ENCODE measurements at regions of chr2 and their contacts with region 1.

Region 1: DNA sequence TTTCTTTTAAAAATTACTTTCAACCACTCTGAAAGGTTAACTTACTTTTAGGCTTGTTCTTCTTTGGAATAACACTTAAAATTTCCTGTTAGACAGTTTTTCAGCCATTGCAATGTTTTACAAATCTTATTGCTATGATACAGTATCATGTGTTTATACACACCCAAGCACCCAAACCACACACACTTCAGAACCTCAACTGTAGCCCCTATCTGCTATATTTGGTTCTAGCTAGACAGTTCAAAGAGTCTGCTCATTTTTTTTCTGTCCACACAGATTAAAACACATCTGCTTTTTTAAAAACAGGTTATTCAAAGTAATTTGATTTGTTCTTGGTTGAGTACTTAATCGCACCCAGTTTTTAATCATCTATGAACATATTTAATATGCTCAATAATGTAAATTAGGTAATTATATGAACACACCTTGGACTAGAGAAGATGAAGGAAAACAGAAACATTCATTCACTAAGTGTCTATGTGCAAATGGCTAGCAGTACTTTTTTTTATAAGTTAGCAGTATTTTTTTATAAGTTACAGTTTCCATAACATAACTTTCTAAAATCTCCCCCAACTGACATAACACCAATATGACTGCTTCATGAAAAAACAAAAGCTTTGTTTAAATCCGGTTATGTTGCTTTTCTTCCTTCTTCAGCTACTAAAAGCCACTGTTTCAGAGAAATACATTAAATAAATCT is 17.6 kb downstream of the FBXO11 start:
- DNase-seq: peak; percentile 50 to 71 (median 63)
- H3K4me3 ChIP-seq: no peak overlapping the region
- H3K4me3 Mint-ChIP-seq: peak overlapping the region in 7 of 8 donors; percentile 39 to 76 (median 58)
- H3K27ac ChIP-seq: peak overlapping the region; percentile 2
- H3K27ac Mint-ChIP-seq: peak overlapping the region; percentile 47 to 92 (median 80)
- H3K4me1 ChIP-seq: peaks cover 54% of the 10 kb centered on the region
- H3K4me1 Mint-ChIP-seq: peaks cover 48 to 80% (median 58%) of the 10 kb centered on the region in 4 donors
- H3K27me3 ChIP-seq: no peaks in the 10 kb centered on the region
- H3K27me3 Mint-ChIP-seq: no peaks in the 10 kb centered on the region

Region 2: DNA sequence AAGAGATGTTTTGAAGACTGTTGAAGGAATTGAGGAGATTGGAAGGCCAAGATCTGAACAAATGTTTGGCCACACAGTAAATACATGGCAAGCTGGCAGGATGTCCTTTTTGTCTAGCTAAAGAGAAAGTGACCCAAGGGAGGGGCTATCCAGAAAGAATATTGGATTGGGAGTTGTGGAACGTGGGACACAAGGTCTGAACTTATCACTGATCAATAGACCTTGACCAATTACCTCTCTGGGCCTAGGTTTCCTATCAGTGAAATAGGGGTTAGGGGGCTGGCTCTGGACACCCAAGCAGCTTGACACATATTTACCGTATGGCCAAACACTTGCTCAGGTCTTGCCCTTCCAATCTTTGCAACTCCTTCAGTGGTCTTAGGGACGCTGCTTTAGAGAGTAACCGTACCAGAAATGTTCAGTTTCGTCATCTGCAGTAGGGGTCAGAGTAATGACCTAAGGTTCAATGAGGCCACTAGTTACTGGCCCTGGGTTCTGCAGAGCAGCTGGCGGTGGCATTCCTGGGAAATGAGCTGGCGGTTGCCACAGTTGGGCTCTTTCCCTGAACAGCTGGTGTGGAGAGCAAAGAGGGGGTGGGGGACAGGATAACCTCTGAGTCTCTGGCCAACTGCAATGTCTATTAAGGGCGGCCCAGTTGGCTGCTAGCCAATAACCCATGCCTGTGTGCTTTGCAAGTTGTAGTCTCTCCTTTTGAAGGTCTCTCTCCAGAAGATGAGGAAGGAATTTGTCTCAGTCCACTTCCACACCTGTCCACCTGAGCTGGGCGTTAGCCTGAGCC is 663.5 kb before region 1 on chr2:
- CTCF ChIA-PET with region 1: no interaction called
- POLR2A ChIA-PET with region 1: no interaction called
- intact Hi-C with region 1: no loop called
- DNase-seq: no peak
- H3K4me3 ChIP-seq: no peak overlapping the region
- H3K4me3 Mint-ChIP-seq: no peak overlapping the region
- H3K27ac ChIP-seq: no peak overlapping the region
- H3K27ac Mint-ChIP-seq: no peak overlapping the region
- H3K4me1 ChIP-seq: no peaks in the 10 kb centered on the region
- H3K4me1 Mint-ChIP-seq: no peaks in the 10 kb centered on the region
- H3K27me3 ChIP-seq: no peaks in the 10 kb centered on the region
- H3K27me3 Mint-ChIP-seq: peaks cover 2 to 3% of the 10 kb centered on the region in 2 donors

Region 3: GRCh38 chr2:47876912-47877311 is 11.8 kb before region 1 on chr2:
- CTCF ChIA-PET with region 1: interaction called, 3 read pairs
- POLR2A ChIA-PET with region 1: no interaction called
- intact Hi-C with region 1: loop called (anchors 2 kb)
- DNase-seq: no peak
- H3K4me3 ChIP-seq: no peak overlapping the region
- H3K4me3 Mint-ChIP-seq: peak overlapping the region in 1 of 8 donors; percentile 3
- H3K27ac ChIP-seq: no peak overlapping the region
- H3K27ac Mint-ChIP-seq: peak overlapping the region; percentile 1 to 89 (median 35)
- H3K4me1 ChIP-seq: peaks cover 37% of the 10 kb centered on the region
- H3K4me1 Mint-ChIP-seq: peaks cover 38 to 72% (median 55%) of the 10 kb centered on the region in 4 donors
- H3K27me3 ChIP-seq: no peaks in the 10 kb centered on the region
- H3K27me3 Mint-ChIP-seq: no peaks in the 10 kb centered on the region